Activated CD4-positive, alpha-beta T cell treated with anti-CD3 and anti-CD28 coated beads, Interleukin-2, amount 10 ng/mL, durations not matched to agents 24 days and 14 days (primary cell): ENCODE measurements at regions of chr12 and their contacts with region 1.

Region 1: GRCh38 chr12:42144408-42145196 is at the start of gene GXYLT1:
- DNase-seq: peak; percentile 95
- H3K4me3 Mint-ChIP-seq: peak within 1 kb of the TSS; percentile 90
- H3K27ac Mint-ChIP-seq: peak within 1 kb of the TSS; percentile 85
- H3K4me1 Mint-ChIP-seq: peaks cover 28% of the 10 kb centered on the region
- H3K27me3 Mint-ChIP-seq: peaks cover 6% of the 10 kb centered on the region
- total RNA-seq, gene GXYLT1: 10.5 TPM in 2 replicates

Region 2: GRCh38 chr12:42097971-42098370 is 46.6 kb before region 1 on chr12:
- intact Hi-C with region 1: loop called (anchors 1 kb)
- DNase-seq: peak; percentile 71
- H3K4me3 Mint-ChIP-seq: peak overlapping the region; percentile 88
- H3K27ac Mint-ChIP-seq: peak overlapping the region; percentile 86
- H3K4me1 Mint-ChIP-seq: peaks cover 33% of the 10 kb centered on the region
- H3K27me3 Mint-ChIP-seq: no peaks in the 10 kb centered on the region

Region 3: DNA sequence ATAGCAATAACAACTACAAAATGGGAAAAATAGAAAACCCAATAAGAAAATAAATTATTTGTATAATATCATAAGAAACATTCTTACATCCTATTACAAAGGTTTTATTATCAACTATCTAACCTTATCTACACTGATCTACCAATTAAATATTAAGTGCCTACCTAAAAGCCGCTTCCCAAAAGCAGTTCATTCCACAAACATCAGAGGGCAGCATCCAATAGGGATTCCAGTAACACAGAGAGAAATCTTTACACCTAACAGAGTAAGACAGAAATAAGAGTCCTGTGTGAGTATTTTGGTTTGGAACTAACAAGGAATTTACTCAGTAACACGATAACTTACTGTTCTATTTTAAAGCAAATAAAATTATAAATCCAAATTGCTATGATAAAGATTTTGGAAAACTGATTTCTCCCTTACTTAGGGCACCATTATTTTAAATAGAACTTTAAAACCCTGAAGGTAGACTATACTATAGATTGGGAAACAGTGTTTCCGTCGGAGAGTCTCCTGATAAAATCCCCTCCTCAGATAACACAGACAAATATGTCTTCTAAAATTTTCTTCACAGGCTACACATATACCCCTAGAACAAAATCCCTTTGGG is 14.9 kb before region 1 on chr12:
- intact Hi-C with region 1: no loop called
- DNase-seq: peak; percentile 62
- H3K4me3 Mint-ChIP-seq: no peak overlapping the region
- H3K27ac Mint-ChIP-seq: no peak overlapping the region
- H3K4me1 Mint-ChIP-seq: peaks cover 13% of the 10 kb centered on the region
- H3K27me3 Mint-ChIP-seq: no peaks in the 10 kb centered on the region

Region 4: GRCh38 chr12:42196723-42197603 is 52.4 kb after region 1 on chr12:
- intact Hi-C with region 1: no loop called
- DNase-seq: no peak
- H3K4me3 Mint-ChIP-seq: no peak overlapping the region
- H3K27ac Mint-ChIP-seq: no peak overlapping the region
- H3K4me1 Mint-ChIP-seq: no peaks in the 10 kb centered on the region
- H3K27me3 Mint-ChIP-seq: no peaks in the 10 kb centered on the region

Region 5: DNA sequence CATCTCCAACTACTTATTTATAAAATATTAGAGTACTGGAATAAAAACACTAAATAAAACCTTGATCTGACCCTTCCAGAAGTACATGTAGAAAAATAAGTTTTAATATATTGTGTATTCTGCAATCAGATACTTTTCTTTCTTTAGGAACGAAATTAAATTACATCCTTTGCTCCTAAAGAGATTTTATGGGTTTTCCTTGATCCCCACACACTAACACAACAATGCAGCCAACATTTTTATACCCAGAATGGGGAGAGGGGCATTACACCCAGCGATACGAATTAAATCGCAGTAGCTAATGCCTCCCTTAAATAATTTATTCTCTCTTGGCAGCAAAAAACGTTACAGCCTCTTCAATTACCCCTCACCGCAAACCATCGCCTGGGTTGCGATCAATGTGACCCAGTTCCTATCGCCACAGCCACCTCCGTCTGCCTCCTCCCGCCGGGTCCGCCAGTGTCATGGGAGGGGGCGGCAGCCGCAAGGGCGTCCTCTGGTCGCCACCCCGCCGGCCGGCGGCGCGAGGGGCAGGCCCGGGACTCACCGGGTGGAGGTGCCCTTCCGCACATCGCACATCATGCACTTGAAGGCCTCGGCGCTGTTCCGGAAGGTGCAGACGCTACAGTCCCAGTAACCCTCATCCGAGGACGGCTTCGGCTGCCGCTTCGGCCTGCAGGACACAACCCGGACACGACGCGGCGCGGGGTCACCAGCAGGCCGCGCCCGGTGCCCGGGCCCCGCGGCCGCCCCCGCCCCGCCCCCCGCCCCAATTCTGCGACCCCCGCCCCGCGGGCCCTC is 92.7 kb after region 1 on chr12:
- intact Hi-C with region 1: loop called (anchors 1 kb)
- DNase-seq: peak; percentile 91
- H3K4me3 Mint-ChIP-seq: peak overlapping the region; percentile 96
- H3K27ac Mint-ChIP-seq: peak overlapping the region; percentile 89
- H3K4me1 Mint-ChIP-seq: peaks cover 42% of the 10 kb centered on the region
- H3K27me3 Mint-ChIP-seq: no peaks in the 10 kb centered on the region

Region 6: DNA sequence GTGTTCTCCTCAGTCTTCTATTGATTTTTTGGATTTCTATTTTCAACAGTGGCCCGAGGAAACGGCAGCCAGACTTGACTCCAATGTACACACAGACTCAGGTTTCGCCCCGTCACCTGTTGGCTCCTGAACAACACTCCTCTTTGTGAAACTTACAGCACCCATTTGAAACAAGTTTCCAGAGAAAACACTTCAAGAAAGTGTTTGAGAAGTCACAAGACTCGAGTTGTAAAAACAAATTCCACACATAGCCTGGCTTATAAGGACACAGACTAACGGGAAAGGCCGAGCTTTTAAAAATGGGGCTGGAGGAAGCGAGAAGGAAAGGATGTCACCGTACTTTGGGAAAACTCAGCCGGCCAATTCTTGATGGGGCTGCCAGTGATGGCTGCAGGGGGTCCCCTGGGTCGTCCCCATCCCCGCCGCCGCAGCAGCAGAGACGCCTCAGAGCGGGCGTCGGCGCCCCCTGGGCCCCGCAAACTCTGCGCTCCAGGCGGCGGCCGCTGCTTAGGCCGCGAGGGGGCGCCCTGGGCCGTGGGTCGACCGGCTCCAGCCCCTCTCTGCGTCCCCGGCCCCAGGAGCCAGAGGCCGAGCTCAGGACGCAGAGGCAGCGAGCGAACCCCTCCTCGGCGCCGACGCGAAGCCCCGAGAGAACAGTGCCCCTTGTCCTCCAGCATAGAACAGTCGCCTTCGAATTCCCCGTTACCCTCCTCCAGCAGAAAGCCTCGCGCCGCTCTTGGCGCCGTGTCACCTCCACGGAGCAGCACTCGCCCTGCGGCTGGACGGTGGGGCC is 338.0 kb after region 1 on chr12:
- intact Hi-C with region 1: loop called (anchors 10 kb)
- DNase-seq: peak; percentile 87
- H3K4me3 Mint-ChIP-seq: peak overlapping the region; percentile 81
- H3K27ac Mint-ChIP-seq: no peak overlapping the region
- H3K4me1 Mint-ChIP-seq: peaks cover 8% of the 10 kb centered on the region
- H3K27me3 Mint-ChIP-seq: peaks cover 76% of the 10 kb centered on the region